PC-3 (cell line): ENCODE measurements at regions of chr6 and their contacts with region 1.

Region 1: DNA sequence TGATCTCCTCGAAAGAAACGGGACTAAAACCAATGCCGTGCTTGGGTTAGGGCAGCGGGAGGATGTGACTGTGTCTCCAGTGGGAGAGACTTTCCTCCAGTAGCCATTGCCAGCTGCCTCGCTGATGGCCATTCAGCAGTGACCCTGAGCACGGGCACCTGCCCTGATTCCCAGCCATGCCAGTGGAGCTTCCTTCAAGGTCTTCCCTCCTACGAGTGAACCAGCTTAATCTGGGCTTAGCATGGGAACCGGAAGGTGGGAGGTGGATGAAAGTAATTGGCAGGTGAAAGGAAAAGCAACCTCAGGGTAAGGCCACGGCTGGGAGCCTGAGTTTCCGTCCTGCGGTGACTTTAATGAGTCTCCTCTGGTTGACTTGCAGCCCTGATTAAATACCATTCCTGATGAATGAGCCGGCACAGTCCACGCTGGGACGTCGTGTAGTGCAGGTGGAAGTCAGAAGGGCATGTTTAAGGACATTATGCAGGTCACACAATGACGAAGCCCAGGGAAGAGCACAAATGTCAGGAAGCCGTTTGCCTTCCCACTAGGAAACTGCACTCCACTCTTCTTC is 813.5 kb downstream of the QKI start:
- DNase-seq: no peak
- ATAC-seq: no peak
- H3K4me3 ChIP-seq: no peak overlapping the region
- H3K27ac ChIP-seq: no peak overlapping the region
- H3K4me1 ChIP-seq: no peaks in the 10 kb centered on the region
- H3K27me3 ChIP-seq: no peaks in the 10 kb centered on the region
- CTCF ChIP-seq: no peak

Region 2: GRCh38 chr6:164533069-164533362 is 305.0 kb after region 1 on chr6:
- CTCF ChIA-PET with region 1: no interaction called
- POLR2A ChIA-PET with region 1: no interaction called
- intact Hi-C with region 1: no loop called
- DNase-seq: no peak
- ATAC-seq: no peak
- H3K4me3 ChIP-seq: no peak overlapping the region
- H3K27ac ChIP-seq: no peak overlapping the region
- H3K4me1 ChIP-seq: no peaks in the 10 kb centered on the region
- H3K27me3 ChIP-seq: no peaks in the 10 kb centered on the region
- CTCF ChIP-seq: no peak

Region 3: DNA sequence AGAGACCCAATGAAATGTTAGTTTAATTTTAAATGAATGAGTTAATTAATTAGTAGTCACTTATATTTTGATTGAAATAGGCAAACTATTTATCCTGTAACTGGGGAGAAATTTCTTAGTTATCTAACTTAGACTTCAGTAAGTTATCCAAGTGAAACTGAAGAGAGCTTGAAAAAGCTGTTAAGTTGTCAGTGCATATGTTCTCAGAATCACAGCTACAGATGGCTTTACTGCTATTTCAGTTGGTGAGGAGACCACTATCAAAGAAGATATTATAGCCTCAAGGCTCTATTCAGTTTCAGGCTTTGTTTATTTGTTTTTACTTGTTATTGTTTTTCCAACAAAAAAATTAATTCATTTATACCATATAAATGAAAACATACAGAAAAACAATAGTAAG is 677.3 kb after region 1 on chr6:
- CTCF ChIA-PET with region 1: no interaction called
- POLR2A ChIA-PET with region 1: no interaction called
- intact Hi-C with region 1: loop called (anchors 5 kb)
- DNase-seq: no peak
- ATAC-seq: no peak
- H3K4me3 ChIP-seq: no peak overlapping the region
- H3K27ac ChIP-seq: no peak overlapping the region
- H3K4me1 ChIP-seq: no peaks in the 10 kb centered on the region
- H3K27me3 ChIP-seq: no peaks in the 10 kb centered on the region
- CTCF ChIP-seq: no peak